GM12878 (cell line): ENCODE measurements at regions of chr9 and their contacts with region 1.

Region 1: GRCh38 chr9:112677040-112677439 is 40.9 kb downstream of the INIP start:
- DNase-seq: no peak
- ATAC-seq: no peak
- H3K4me3 ChIP-seq: no peak overlapping the region
- H3K27ac ChIP-seq: no peak overlapping the region
- H3K4me1 ChIP-seq: no peaks in the 10 kb centered on the region
- H3K27me3 ChIP-seq: no peaks in the 10 kb centered on the region
- CTCF ChIP-seq: no peak
- EP300 ChIP-seq: no peak
- POLR2A ChIP-seq: no peak
- RAD21 ChIP-seq: no peak

Region 2: DNA sequence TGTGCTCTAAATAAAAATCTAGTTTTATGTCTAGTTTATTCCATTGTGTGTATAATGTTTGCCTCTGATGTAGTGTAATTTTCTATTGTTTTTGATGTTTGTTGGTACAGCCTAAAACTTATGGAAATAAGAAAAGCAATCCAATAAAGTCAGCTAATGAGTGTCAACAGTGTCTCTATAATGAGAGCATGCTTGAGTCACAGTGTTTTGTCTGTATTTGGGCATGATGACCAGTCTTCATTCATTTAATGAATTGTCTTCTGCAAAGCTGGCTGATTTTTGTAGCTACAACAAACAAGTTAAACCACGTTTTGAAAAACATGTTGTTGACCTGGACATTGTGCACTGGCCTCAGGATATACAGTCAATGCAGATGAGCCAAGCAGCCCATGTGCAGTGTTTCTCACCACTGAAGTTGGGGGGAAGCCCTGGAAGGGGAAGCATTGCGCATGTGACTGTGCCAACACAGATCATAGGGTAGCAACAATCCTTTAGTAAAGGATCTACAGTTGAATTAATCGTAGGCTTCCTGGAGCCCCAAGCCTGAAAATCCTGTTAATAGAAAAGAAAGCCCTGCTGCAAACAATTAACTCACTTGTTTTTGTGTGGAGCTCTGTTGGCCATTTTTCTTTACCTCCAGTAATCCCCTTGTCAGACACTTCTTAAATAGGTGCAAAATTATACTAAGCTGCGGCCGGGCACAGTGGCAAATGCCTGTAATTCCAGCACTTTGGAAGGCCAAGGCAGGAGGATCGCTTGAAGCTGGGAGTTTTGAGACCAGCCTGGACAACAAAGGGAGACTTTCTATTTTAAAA is 47.2 kb before region 1 on chr9:
- CTCF ChIA-PET with region 1: no interaction called
- POLR2A ChIA-PET with region 1: no interaction called
- RAD21 ChIA-PET with region 1: no interaction called
- SMC1A ChIA-PET with region 1: no interaction called
- in situ Hi-C with region 1: loop called (anchors 5 kb)
- intact Hi-C with region 1: no loop called
- DNase-seq: no peak
- ATAC-seq: no peak
- H3K4me3 ChIP-seq: no peak overlapping the region
- H3K27ac ChIP-seq: no peak overlapping the region
- H3K4me1 ChIP-seq: no peaks in the 10 kb centered on the region
- H3K27me3 ChIP-seq: no peaks in the 10 kb centered on the region
- CTCF ChIP-seq: no peak
- EP300 ChIP-seq: no peak
- POLR2A ChIP-seq: no peak
- RAD21 ChIP-seq: no peak

Region 3: GRCh38 chr9:112642126-112642525 is 34.9 kb before region 1 on chr9:
- CTCF ChIA-PET with region 1: no interaction called
- POLR2A ChIA-PET with region 1: no interaction called
- RAD21 ChIA-PET with region 1: no interaction called
- SMC1A ChIA-PET with region 1: no interaction called
- in situ Hi-C with region 1: no loop called
- intact Hi-C with region 1: no loop called
- DNase-seq: no peak
- ATAC-seq: no peak
- H3K4me3 ChIP-seq: no peak overlapping the region
- H3K27ac ChIP-seq: no peak overlapping the region
- H3K4me1 ChIP-seq: no peaks in the 10 kb centered on the region
- H3K27me3 ChIP-seq: no peaks in the 10 kb centered on the region
- CTCF ChIP-seq: no peak
- EP300 ChIP-seq: no peak
- POLR2A ChIP-seq: no peak
- RAD21 ChIP-seq: no peak